Motor neuron (in vitro differentiated cells): ENCODE measurements at regions of chr3 and their contacts with region 1.

Region 1: GRCh38 chr3:64399205-64399800 is 174.0 kb upstream of the PRICKLE2 start:
- ATAC-seq: peak in 4 of 8 experiments; percentile 58 to 80 (median 74)
- H3K4me3 ChIP-seq: no peak overlapping the region
- H3K27ac ChIP-seq: no peak overlapping the region
- H3K4me1 ChIP-seq: peaks cover 17 to 30% of the 10 kb centered on the region in 2 donors

Region 2: DNA sequence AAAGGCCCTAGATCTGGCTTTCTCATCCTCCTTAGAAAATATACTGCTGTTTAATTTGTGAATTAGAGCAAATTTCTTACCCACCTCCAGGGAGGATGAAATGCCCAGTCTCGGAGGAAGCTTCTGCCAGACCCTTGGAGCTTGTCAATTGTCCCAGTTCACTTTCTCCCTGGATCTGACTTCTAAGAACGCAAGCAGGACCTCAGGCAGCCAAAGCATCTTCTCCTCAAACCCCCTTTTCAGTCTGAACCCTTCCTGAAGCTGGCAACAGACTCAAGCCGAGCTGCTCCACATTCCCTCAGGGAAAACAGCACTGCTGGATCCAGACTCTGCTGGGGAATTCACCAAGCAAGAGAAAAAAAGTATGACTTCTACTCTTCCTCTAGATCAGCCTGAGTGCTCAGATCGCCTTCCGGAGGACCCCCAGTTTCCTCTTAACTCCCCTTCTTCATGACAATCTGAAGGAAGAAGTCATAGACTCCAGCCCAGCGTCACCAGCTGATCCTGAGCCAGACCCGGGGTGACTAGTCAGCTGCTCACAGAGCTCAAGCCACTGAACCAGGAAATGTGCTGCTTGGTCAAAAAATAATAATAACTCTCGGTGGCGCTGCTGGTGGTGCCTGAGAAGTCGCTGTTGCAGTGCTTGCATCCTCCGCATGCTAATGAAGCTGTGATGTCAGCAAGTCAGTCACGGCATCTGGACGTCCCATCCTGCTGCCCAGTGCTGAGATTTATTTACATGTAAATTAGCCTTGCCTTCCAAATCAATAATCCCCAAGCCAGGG is 174.3 kb before region 1 on chr3 and contains the start of gene PRICKLE2:
- in situ Hi-C with region 1: loop called in 2 of 9 experiments (anchors 25 kb)
- ATAC-seq: peak; percentile 87 to 96 (median 94)
- H3K4me3 ChIP-seq: peak within 1 kb of the TSS; percentile 35 to 44 (median 38)
- H3K27ac ChIP-seq: peak within 1 kb of the TSS; percentile 58 to 73
- H3K4me1 ChIP-seq: peaks cover 43 to 46% of the 10 kb centered on the region in 2 donors
- total RNA-seq, gene PRICKLE2: 2.1 to 43.1 (median 12.0) TPM

Region 3: GRCh38 chr3:64355401-64355807 is 43.9 kb before region 1 on chr3:
- in situ Hi-C with region 1: no loop called
- ATAC-seq: peak in 6 of 8 experiments; percentile 38 to 79 (median 52)
- H3K4me3 ChIP-seq: no peak overlapping the region
- H3K27ac ChIP-seq: no peak overlapping the region
- H3K4me1 ChIP-seq: peaks cover 12 to 25% of the 10 kb centered on the region in 2 donors